Activated naive CD4-positive, alpha-beta T cell treated with anti-CD3 and anti-CD28 coated beads for 36 hours (primary cell): ENCODE measurements at regions of chr16 and their contacts with region 1.

Region 1: GRCh38 chr16:4506450-4506849 is 30.3 kb downstream of the HMOX2 start:
- DNase-seq: peak; percentile 79
- H3K4me3 Mint-ChIP-seq: peak overlapping the region; percentile 48
- H3K27ac Mint-ChIP-seq: peak overlapping the region; percentile 91
- H3K4me1 Mint-ChIP-seq: peaks cover 46% of the 10 kb centered on the region
- H3K27me3 Mint-ChIP-seq: no peaks in the 10 kb centered on the region

Region 2: DNA sequence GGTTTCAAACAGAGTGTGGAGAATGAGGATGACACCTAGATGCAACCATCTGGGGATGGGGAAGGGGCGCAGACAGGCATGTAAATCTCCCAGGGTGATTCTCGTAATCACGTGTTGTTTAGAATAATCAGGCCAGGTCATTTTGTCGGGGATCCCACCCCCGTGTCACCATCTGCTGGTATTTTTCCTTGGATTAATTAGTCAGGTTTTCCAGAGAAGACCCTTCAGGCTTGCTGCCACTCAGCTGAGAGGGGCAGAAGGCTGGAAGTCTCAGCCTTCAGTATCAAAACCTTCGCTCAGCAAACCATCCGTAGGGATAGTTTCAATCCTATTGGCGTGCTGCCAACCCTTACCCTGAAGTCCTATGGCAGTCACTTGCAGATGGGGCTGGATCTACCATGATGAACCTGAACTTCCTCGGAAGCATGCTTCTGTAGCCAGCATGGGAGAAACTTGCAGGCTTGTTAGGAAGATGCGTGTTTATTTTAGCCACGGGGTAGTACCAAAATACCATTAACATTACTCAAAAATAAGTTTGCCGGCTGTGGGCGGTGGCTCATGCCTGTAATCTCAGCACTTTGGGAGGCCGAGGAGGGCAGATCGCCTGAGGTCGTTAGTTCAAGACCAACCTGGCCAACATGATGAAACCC is 382.7 kb before region 1 on chr16:
- CTCF ChIA-PET with region 1: no interaction called
- intact Hi-C with region 1: no loop called
- DNase-seq: no peak
- H3K4me3 Mint-ChIP-seq: no peak overlapping the region
- H3K27ac Mint-ChIP-seq: no peak overlapping the region
- H3K4me1 Mint-ChIP-seq: no peaks in the 10 kb centered on the region
- H3K27me3 Mint-ChIP-seq: peaks cover 2% of the 10 kb centered on the region

Region 3: GRCh38 chr16:4494746-4495490 is 11.5 kb before region 1 on chr16:
- CTCF ChIA-PET with region 1: interaction called, 15 read pairs
- intact Hi-C with region 1: no loop called
- DNase-seq: no peak
- H3K4me3 Mint-ChIP-seq: no peak overlapping the region
- H3K27ac Mint-ChIP-seq: peak overlapping the region; percentile 56
- H3K4me1 Mint-ChIP-seq: peaks cover 82% of the 10 kb centered on the region
- H3K27me3 Mint-ChIP-seq: no peaks in the 10 kb centered on the region

Region 4: DNA sequence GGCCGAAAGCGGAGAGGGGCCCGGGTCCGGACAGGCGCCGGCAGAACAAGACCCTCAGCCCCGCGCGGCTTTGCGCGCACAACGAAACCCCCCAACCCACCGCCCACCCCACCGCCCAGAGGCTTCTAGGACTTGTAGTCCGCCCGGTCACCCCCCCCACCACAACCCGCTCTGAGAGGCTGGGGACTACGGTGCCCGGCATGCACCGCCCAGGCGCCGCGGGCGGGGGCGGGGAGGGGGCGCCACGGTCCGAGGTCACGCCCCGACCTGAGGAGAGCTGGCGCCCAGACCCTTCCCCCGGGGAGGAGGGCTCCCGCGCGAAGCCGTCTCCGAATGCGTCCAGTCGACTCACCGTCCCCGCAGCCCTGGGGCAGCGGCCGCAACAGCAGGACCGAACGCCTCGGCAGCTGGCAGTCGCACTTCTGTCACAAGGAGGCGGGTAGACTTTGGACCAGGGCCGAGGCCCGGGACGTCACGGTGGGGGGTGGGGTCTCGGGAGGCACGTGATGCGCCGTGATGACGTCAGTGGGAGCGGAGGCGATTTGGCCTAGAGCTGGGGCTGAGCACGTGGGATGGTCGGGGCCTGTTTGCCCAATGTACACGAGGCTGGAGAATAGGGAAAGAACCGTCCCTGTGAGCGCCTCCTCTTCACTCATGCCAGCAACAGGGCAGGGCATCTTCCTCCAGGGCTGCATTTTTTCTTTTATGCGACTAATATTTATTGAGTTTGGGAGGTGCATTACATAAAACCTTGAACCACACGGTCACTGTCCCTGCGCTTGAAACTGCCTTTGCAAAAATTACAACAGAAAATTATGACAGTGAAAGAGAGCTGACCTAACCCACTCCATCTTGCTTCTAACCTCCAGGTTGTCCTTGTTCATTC is 32.1 kb after region 1 on chr16 and contains the start of gene CDIP1:
- CTCF ChIA-PET with region 1: interaction called, 10 read pairs
- intact Hi-C with region 1: loop called (anchors 2 kb)
- DNase-seq: peak; percentile 99
- H3K4me3 Mint-ChIP-seq: peak within 1 kb of the TSS; percentile 77
- H3K27ac Mint-ChIP-seq: peak within 1 kb of the TSS; percentile 54
- H3K4me1 Mint-ChIP-seq: peaks cover 41% of the 10 kb centered on the region
- H3K27me3 Mint-ChIP-seq: no peaks in the 10 kb centered on the region
- total RNA-seq, gene CDIP1: 31.9 to 35.7 TPM

Region 5: GRCh38 chr16:4580245-4580644 is 73.8 kb after region 1 on chr16:
- CTCF ChIA-PET with region 1: interaction called, 93 read pairs
- intact Hi-C with region 1: loop called (anchors 1 kb)
- DNase-seq: no peak
- H3K4me3 Mint-ChIP-seq: no peak overlapping the region
- H3K27ac Mint-ChIP-seq: no peak overlapping the region
- H3K4me1 Mint-ChIP-seq: no peaks in the 10 kb centered on the region
- H3K27me3 Mint-ChIP-seq: no peaks in the 10 kb centered on the region

Region 6: DNA sequence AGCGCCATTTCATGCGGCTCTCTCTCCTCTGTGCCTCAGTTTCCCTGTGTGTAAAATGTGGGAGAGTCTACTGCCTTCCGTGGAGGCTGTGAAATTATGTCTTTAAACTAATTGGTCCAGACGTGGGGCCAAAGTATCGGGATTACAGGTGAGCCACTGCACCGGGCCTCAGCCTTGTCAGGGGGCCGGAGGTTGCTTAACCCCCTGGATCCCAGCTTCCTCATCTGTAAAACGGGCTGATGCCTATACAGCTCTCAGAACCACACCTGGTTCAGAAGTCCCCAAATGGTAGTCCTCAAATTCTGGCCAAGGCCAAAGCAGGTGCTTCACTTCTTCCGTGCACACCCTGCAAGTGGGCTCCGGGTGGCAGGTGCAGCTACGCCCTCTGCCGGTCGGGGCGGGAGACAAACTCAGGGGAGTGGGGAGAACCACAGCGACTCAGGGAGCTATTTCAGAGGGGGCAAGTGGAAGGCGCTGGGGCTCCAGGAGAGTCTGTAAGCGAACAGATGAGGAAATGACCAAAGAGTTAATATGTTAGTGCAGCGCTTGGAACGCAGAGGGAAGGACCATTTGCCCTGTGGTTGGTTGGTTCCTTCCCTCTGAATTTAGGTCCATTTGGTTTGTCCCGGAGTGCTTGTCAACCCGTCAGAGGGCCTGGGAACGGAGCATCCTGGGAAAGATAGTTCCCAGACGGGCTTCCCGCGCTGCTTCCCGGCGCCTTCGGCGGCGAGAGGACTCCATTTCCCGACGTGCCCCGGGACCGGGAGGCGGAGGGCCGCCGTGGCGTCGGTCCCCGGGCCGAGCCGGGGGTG is 117.8 kb after region 1 on chr16 and contains the start of gene MGRN1:
- CTCF ChIA-PET with region 1: interaction called, 13 read pairs
- intact Hi-C with region 1: loop called (anchors 1 kb)
- DNase-seq: peak; percentile 96
- H3K4me3 Mint-ChIP-seq: peak within 1 kb of the TSS; percentile 97
- H3K27ac Mint-ChIP-seq: peak within 1 kb of the TSS; percentile 99
- H3K4me1 Mint-ChIP-seq: peaks cover 30% of the 10 kb centered on the region
- H3K27me3 Mint-ChIP-seq: no peaks in the 10 kb centered on the region
- total RNA-seq, gene MGRN1: 46.3 to 48.8 TPM